ENCODE measurements at regions of chr6 and their contacts with region 1.

Region 1: GRCh38 chr6:138001750-138002349 is 105.4 kb downstream of the PERP start:
- DNase-seq: peak; percentile 69
- ATAC-seq: peak; percentile 52; the same call in 1 of the 2 replicates
- H3K4me3 ChIP-seq: no peak overlapping the region
- H3K27ac ChIP-seq: peak overlapping the region; percentile 74
- H3K4me1 ChIP-seq: peaks cover 40% of the 10 kb centered on the region
- H3K27me3 ChIP-seq: no peaks in the 10 kb centered on the region
- CTCF ChIP-seq: peak; percentile 85; the same call in 1 of the 2 replicates

Region 2: GRCh38 chr6:137767911-137768690 is 233.7 kb before region 1 on chr6:
- CTCF ChIA-PET with region 1: no interaction called
- POLR2A ChIA-PET with region 1: no interaction called
- in situ Hi-C with region 1: no loop called
- intact Hi-C with region 1: no loop called
- DNase-seq: no peak
- ATAC-seq: no peak
- H3K4me3 ChIP-seq: no peak overlapping the region
- H3K27ac ChIP-seq: no peak overlapping the region
- H3K4me1 ChIP-seq: no peaks in the 10 kb centered on the region
- H3K27me3 ChIP-seq: no peaks in the 10 kb centered on the region
- CTCF ChIP-seq: no peak

Region 3: GRCh38 chr6:138073264-138073663 is 71.4 kb after region 1 on chr6:
- CTCF ChIA-PET with region 1: no interaction called
- POLR2A ChIA-PET with region 1: interaction called, 10 read pairs
- in situ Hi-C with region 1: no loop called
- intact Hi-C with region 1: no loop called
- DNase-seq: no peak
- ATAC-seq: no peak
- H3K4me3 ChIP-seq: no peak overlapping the region
- H3K27ac ChIP-seq: no peak overlapping the region
- H3K4me1 ChIP-seq: no peaks in the 10 kb centered on the region
- H3K27me3 ChIP-seq: no peaks in the 10 kb centered on the region
- CTCF ChIP-seq: no peak

Region 4: GRCh38 chr6:138088330-138088766 is 86.5 kb after region 1 on chr6:
- CTCF ChIA-PET with region 1: interaction called, 6 read pairs
- POLR2A ChIA-PET with region 1: no interaction called
- in situ Hi-C with region 1: no loop called
- intact Hi-C with region 1: loop called (anchors 5 kb)
- DNase-seq: peak; percentile 86
- ATAC-seq: peak; percentile 75
- H3K4me3 ChIP-seq: peak overlapping the region in 1 of 2 experiments; percentile 26; a peak in 2 of 4 replicates
- H3K27ac ChIP-seq: peak overlapping the region; percentile 100
- H3K4me1 ChIP-seq: peaks cover 76% of the 10 kb centered on the region
- H3K27me3 ChIP-seq: no peaks in the 10 kb centered on the region
- CTCF ChIP-seq: no peak

Region 5: DNA sequence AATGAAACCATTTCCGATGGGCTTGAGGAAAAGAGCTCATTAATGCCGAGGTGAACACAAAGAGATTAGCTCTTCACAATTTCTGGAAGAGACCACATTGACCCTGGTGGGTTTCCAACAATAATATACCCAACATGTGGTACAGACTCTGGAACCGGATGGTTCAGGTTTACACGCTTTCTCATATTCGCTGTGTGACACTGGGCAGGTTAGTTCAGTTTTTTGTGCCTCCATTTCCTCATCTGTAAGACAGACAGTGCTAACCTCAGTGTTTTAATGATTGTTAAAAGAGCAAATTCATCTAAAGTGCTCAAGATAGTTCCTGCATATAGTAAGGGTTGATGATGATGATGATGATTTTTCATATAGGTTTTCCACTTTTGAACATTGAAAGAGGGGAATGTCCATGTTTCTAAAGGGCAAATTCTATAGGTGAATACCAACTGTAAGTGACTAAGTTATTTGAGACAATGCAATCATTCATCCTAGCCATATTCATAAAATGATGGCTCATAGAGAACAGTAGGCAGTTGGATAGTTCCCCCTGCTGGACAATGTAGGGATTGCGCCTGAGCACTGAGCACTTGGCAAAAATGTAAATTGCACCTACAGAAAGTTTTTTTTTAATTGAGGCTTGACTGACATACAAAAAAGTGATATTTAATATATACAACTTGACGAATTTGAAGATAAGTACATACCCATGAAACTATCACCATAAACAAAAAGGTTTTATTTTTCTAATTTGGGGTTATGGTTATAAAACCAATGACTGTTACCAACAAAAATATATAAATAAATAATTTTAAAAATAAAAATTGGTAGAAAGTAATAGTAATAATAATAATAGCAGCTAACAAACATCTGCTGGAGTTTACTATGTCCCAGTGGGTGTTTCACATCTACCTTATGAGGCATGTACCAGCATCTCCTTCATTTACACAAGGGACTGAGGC is 107.5 kb after region 1 on chr6:
- CTCF ChIA-PET with region 1: interaction called, 15 read pairs
- POLR2A ChIA-PET with region 1: interaction called, 7 read pairs
- in situ Hi-C with region 1: no loop called
- intact Hi-C with region 1: loop called (anchors 1 kb)
- DNase-seq: peak; percentile 88
- ATAC-seq: peak; percentile 42; the same call in 1 of the 2 replicates
- H3K4me3 ChIP-seq: peak overlapping the region; percentile 87 to 90
- H3K27ac ChIP-seq: peak overlapping the region; percentile 96
- H3K4me1 ChIP-seq: peaks cover 12% of the 10 kb centered on the region
- H3K27me3 ChIP-seq: no peaks in the 10 kb centered on the region
- CTCF ChIP-seq: peak; percentile 87; the same call in 1 of the 2 replicates

Region 6: GRCh38 chr6:138287144-138287955 is 285.5 kb after region 1 on chr6:
- CTCF ChIA-PET with region 1: no interaction called
- POLR2A ChIA-PET with region 1: no interaction called
- in situ Hi-C with region 1: no loop called
- intact Hi-C with region 1: loop called (anchors 5 kb)
- DNase-seq: peak; percentile 10
- ATAC-seq: peak; percentile 74
- H3K4me3 ChIP-seq: no peak overlapping the region
- H3K27ac ChIP-seq: no peak overlapping the region
- H3K4me1 ChIP-seq: no peaks in the 10 kb centered on the region
- H3K27me3 ChIP-seq: no peaks in the 10 kb centered on the region
- CTCF ChIP-seq: peak; percentile 79

Region 7: DNA sequence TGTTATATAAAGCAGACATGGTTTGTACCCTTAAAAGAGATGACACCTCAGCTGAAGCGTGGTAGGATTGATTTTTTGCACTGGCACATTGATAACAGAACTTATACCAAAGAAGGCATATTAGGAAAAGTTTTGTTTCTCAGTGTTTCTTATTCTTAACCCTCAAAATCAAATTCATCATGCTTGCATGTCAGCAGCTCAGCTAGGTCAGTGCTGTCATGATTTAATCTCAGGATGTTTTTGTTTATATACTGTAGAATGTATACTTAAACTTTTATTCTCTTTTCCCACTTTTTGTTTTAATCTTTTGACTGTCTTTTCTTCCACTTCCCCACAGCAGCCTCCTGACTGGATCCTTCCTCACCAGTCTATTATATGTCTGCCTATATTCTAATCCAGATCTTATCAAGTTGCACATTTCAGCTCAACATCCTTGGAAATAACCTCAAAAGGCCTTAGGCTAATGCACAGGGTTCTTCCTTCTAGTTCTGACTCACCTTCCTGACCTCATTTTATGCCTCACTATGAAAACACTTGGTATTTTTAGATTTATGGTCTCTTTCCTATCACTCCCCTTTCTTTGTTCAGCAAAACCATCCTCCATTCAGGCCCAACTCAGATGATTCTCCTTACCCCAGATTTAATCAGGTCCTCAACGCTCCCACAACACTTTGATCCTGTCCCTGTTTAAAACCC is 409.3 kb after region 1 on chr6:
- CTCF ChIA-PET with region 1: no interaction called
- POLR2A ChIA-PET with region 1: no interaction called
- in situ Hi-C with region 1: no loop called
- intact Hi-C with region 1: loop called (anchors 10 kb)
- DNase-seq: peak; percentile 71
- ATAC-seq: peak; percentile 82
- H3K4me3 ChIP-seq: no peak overlapping the region
- H3K27ac ChIP-seq: no peak overlapping the region
- H3K4me1 ChIP-seq: peaks cover 3% of the 10 kb centered on the region; the same call in 1 of the 2 replicates
- H3K27me3 ChIP-seq: no peaks in the 10 kb centered on the region
- CTCF ChIP-seq: no peak

Region 8: DNA sequence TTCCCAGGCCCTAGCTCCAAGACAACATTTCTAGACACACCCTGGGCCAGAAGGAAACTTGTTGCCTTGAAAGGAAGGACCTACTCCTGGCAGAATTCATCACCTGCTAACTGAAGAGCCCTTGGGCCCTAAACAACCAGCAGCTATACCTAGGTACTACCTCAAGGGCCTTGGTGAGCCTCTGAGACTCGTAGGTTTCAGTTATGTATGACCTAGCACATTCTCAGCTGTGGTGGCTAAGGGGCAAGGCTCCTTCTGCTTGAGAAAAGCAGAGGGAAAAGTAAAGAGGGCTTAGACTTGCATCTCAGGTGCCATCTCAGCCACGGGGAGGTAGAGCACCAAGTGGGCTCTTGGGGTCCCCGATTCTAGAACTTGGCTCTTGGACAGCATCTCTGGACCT is 629.7 kb after region 1 on chr6:
- CTCF ChIA-PET with region 1: no interaction called
- POLR2A ChIA-PET with region 1: no interaction called
- in situ Hi-C with region 1: no loop called
- intact Hi-C with region 1: no loop called
- DNase-seq: no peak
- ATAC-seq: no peak
- H3K4me3 ChIP-seq: no peak overlapping the region
- H3K27ac ChIP-seq: no peak overlapping the region
- H3K4me1 ChIP-seq: no peaks in the 10 kb centered on the region
- H3K27me3 ChIP-seq: no peaks in the 10 kb centered on the region
- CTCF ChIP-seq: no peak